Activated CD8-positive, alpha-beta T cell treated with anti-CD3 and anti-CD28 coated beads, Interleukin-2, amount 10 ng/mL, durations not matched to agents 7 days and 5 days (primary cell): ENCODE measurements at regions of chr10 and their contacts with region 1.

Region 1: DNA sequence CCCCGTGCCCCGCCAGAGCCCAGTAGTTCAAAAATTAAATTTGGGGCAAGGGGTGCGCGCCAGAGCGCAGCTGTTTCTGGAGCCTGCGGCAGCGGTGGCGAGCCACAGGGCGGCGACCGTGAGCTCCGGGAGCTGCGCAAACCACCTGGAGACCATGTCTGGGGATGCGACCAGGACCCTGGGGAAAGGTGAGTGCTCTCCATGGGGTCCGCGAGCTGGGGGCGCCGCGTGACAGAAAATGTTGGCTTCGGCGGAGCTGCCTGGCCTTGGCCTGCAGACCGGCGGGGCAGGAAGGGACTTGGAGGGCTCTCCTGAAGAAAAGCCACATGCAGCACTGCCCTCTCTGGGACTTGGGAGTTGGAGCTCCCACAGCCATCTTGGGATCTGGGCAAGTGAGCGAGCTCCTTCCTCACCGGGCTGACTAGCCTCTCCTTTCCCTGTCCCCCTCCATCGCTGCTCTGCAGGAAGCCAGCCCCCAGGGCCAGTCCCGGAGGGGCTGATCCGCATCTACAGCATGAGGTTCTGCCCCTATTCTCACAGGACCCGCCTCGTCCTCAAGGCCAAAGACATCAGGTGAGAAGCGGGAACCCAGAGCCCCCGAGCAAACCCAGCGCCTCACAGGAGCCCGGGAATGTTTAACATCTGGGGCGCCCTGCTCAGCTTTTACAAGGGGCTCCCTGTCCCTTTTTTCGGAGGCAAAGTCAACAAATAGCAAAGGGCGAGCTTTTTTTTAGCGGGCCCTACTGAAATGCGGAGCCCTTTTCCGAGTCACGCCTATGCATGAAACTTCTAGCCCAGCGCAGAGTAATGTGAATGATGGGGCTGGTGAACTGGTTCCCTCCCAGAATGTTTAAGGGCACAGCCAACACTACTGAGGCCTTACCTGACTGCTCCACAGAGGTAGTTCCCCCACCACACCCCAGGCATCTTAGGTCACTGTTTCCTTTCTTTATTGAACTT is 6.1 kb downstream of the GSTO2 start:
- DNase-seq: peak; percentile 49
- ATAC-seq: peak; percentile 90
- H3K4me3 Mint-ChIP-seq: peak overlapping the region; percentile 45
- H3K27ac Mint-ChIP-seq: no peak overlapping the region
- H3K4me1 Mint-ChIP-seq: peaks cover 8% of the 10 kb centered on the region
- H3K27me3 Mint-ChIP-seq: peaks cover 20% of the 10 kb centered on the region

Region 2: DNA sequence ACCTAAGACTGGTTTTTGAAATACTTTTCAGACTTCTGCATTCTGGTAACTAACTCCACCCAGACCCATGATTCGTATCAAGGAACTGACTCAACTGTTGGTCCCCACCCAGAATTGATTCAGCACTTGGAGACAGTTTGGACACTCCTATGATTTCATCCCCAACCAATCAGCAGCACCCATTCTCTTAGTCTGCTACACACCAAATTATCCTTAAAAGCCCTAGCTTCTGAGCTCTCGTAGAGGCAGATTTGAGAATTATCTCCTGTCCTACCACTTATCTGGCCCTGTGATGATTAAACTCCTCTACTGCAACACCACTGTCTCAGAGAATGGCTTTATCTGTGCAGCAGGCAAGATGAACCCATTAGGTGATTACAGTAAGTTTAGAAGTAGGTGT is 28.1 kb before region 1 on chr10:
- CTCF ChIA-PET with region 1: interaction called, 94 read pairs
- POLR2A ChIA-PET with region 1: no interaction called
- DNase-seq: no peak
- ATAC-seq: peak; percentile 31
- H3K4me3 Mint-ChIP-seq: no peak overlapping the region
- H3K27ac Mint-ChIP-seq: peak overlapping the region; percentile 58
- H3K4me1 Mint-ChIP-seq: peaks cover 16% of the 10 kb centered on the region
- H3K27me3 Mint-ChIP-seq: peaks cover 12% of the 10 kb centered on the region

Region 3: GRCh38 chr10:104291439-104291951 is 16.5 kb after region 1 on chr10:
- CTCF ChIA-PET with region 1: interaction called, 265 read pairs
- POLR2A ChIA-PET with region 1: no interaction called
- DNase-seq: peak; percentile 93
- ATAC-seq: peak; percentile 98
- H3K4me3 Mint-ChIP-seq: no peak overlapping the region
- H3K27ac Mint-ChIP-seq: no peak overlapping the region
- H3K4me1 Mint-ChIP-seq: peaks cover 13% of the 10 kb centered on the region
- H3K27me3 Mint-ChIP-seq: peaks cover 32% of the 10 kb centered on the region

Region 4: GRCh38 chr10:104322416-104322782 is 47.4 kb after region 1 on chr10:
- CTCF ChIA-PET with region 1: interaction called, 15 read pairs
- POLR2A ChIA-PET with region 1: interaction called, 3 read pairs
- DNase-seq: peak; percentile 65
- ATAC-seq: peak; percentile 54
- H3K4me3 Mint-ChIP-seq: peak overlapping the region; percentile 61
- H3K27ac Mint-ChIP-seq: peak overlapping the region; percentile 91
- H3K4me1 Mint-ChIP-seq: peaks cover 93% of the 10 kb centered on the region
- H3K27me3 Mint-ChIP-seq: no peaks in the 10 kb centered on the region

Region 5: GRCh38 chr10:104345941-104346340 is 70.9 kb after region 1 on chr10:
- CTCF ChIA-PET with region 1: interaction called, 152 read pairs
- POLR2A ChIA-PET with region 1: no interaction called
- DNase-seq: no peak
- ATAC-seq: no peak
- H3K4me3 Mint-ChIP-seq: no peak overlapping the region
- H3K27ac Mint-ChIP-seq: peak overlapping the region; percentile 53
- H3K4me1 Mint-ChIP-seq: peaks cover 15% of the 10 kb centered on the region
- H3K27me3 Mint-ChIP-seq: peaks cover 5% of the 10 kb centered on the region